ENCODE measurements at regions of chr6 and their contacts with region 1.

Region 1: DNA sequence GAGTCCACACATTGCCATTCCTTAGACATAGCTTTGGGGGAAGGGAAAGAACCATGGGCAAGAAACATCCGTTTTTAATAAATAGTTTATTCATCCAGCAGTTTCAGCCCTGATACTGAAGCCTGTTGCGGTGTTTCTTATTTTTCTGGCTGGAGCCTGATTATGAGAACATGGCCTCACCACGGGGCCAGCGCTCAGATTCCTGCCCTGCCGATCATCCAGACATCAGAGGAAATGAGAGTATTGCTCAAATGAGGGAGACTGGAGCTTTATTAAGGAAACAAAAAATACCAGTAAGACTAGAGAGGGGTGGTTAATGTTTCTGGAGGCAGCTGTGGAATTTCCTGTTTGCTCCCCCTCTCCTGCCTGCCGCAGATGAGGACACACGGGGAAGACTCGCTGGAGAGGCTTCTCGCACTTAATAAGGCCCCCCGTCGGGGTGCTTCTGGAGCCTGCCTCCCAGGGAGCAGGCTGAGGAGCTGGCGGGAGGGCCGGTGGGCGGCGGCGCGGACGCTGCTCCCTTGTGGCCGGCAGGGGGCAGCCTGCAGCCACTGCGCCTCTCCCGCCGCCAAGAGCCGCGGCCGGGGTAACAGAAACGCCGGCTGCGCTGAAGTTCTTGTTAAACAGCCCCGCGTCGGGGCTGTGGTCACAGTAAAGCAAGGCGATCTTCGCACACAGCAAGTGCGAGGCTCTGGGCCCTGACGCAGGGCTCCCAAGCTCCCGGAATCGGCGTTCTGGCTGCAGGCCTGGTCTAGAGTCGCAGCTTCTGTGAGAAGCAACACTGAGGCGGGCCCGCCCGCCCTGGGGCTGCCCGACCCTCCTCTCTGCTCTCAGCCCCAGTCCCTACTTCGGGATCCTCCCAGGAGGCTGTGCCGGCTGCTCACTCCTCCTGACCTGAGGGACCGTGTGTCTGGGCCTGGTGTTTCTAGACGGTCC is 17.5 kb downstream of the LEMD2 start:
- DNase-seq: peak; percentile 96
- ATAC-seq: peak; percentile 81
- H3K4me3 ChIP-seq: no peak overlapping the region
- H3K27ac ChIP-seq: peak overlapping the region; percentile 98
- H3K4me1 ChIP-seq: peaks cover 49% of the 10 kb centered on the region
- H3K27me3 ChIP-seq: no peaks in the 10 kb centered on the region
- CTCF ChIP-seq: peak; percentile 98
- POLR2A ChIP-seq: no peak
- RAD21 ChIP-seq: peak; percentile 90

Region 2: DNA sequence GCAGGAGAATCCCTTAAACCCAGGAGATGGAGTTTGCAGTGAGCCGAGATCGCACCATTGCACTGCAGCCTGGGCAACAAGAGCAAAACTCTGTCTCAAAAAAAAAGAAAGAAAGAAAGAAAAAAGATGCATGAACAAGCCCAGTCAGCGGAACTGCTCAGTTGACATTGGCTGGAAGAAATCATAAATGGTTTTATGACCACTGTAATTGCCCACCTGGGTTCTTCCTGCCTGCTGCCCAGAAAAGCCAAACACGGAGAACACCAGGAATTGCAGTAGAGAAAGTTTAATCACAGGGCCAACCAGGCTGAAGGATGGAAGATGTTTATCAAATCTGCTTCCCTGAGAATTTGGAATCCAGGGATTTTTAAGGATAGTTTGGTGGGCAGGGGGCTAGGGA is 214.0 kb before region 1 on chr6:
- CTCF ChIA-PET with region 1: no interaction called
- POLR2A ChIA-PET with region 1: no interaction called
- dilution Hi-C with region 1: no loop called
- in situ Hi-C with region 1: no loop called
- intact Hi-C with region 1: no loop called
- DNase-seq: no peak
- ATAC-seq: no peak
- H3K4me3 ChIP-seq: no peak overlapping the region
- H3K27ac ChIP-seq: no peak overlapping the region
- H3K4me1 ChIP-seq: no peaks in the 10 kb centered on the region
- H3K27me3 ChIP-seq: no peaks in the 10 kb centered on the region
- CTCF ChIP-seq: no peak
- POLR2A ChIP-seq: no peak
- RAD21 ChIP-seq: no peak

Region 3: GRCh38 chr6:33579828-33580714 is 191.3 kb before region 1 on chr6 and contains the start of gene BAK1:
- CTCF ChIA-PET with region 1: no interaction called
- POLR2A ChIA-PET with region 1: no interaction called
- dilution Hi-C with region 1: no loop called
- in situ Hi-C with region 1: loop called (anchors 10 kb)
- intact Hi-C with region 1: no loop called
- DNase-seq: peak; percentile 89
- ATAC-seq: peak; percentile 99
- H3K4me3 ChIP-seq: peak within 1 kb of the TSS; percentile 91
- H3K27ac ChIP-seq: peak within 1 kb of the TSS; percentile 80
- H3K4me1 ChIP-seq: peaks cover 6% of the 10 kb centered on the region
- H3K27me3 ChIP-seq: no peaks in the 10 kb centered on the region
- CTCF ChIP-seq: peak; percentile 55
- POLR2A ChIP-seq: peak; percentile 54; the same call in 1 of the 2 replicates
- RAD21 ChIP-seq: peak; percentile 26; the same call in 1 of the 2 replicates
- total RNA-seq, gene BAK1: 12.0 and 12.5 TPM in 2 replicates

Region 4: DNA sequence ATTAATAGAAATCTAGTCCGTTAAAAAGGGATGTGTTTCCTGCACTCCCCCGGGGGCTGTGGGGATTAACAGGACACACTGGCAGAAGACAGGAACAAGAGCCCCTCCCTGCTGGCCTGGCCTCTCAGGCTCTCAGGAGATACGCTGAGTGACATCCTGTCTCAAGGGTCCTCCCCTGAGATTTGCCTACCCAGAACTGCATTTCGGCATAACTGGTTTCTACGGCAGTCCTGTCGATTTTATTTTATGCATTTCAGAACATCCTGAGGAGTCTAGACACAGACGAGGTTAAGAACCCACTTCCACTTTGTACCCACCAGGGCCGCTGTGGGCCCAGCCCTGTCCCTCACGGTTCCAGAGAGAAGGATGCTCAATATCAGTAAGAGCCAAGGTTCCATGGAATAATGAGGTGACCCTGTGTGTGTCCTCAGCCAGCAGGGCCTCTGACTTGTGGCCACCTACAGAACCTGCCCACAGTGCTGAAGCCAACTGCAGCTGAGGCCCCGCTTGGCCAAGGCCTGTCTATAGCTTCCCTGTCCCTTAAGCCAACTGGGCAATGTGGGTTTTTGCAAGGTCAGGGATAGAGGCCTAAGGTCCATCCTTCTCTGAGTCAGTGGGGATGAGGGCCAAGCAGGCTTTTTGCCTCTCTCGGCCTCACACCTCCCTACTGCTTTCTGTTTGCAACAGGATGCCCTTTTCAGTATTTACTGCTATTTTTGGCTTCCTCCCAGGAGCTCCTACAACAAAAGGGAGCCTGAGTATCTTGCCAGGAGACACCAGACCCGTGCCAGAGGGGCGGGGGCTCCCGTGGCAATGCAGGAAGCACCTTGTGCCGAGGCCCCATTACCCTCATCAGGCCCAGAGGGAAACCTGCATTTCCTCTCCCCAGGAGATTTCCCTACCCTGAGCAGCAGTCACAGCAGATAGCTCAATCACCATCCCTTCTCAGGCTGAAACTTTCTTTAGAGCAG is 74.6 kb before region 1 on chr6:
- CTCF ChIA-PET with region 1: no interaction called
- POLR2A ChIA-PET with region 1: no interaction called
- dilution Hi-C with region 1: no loop called
- in situ Hi-C with region 1: no loop called
- intact Hi-C with region 1: no loop called
- DNase-seq: peak; percentile 61
- ATAC-seq: peak; percentile 72
- H3K4me3 ChIP-seq: no peak overlapping the region
- H3K27ac ChIP-seq: peak overlapping the region; percentile 23; the same call in 1 of the 2 replicates
- H3K4me1 ChIP-seq: peaks cover 20% of the 10 kb centered on the region
- H3K27me3 ChIP-seq: no peaks in the 10 kb centered on the region
- CTCF ChIP-seq: no peak
- POLR2A ChIP-seq: no peak
- RAD21 ChIP-seq: no peak

Region 5: GRCh38 chr6:33744001-33744848 is 27.2 kb before region 1 on chr6:
- CTCF ChIA-PET with region 1: interaction called, 17 read pairs
- POLR2A ChIA-PET with region 1: no interaction called
- dilution Hi-C with region 1: no loop called
- in situ Hi-C with region 1: no loop called
- intact Hi-C with region 1: loop called (anchors 2 kb)
- DNase-seq: peak; percentile 70
- ATAC-seq: peak; percentile 61
- H3K4me3 ChIP-seq: no peak overlapping the region
- H3K27ac ChIP-seq: no peak overlapping the region
- H3K4me1 ChIP-seq: peaks cover 22% of the 10 kb centered on the region
- H3K27me3 ChIP-seq: peaks cover 6% of the 10 kb centered on the region; the same call in 1 of the 2 replicates
- CTCF ChIP-seq: peak; percentile 95
- POLR2A ChIP-seq: no peak
- RAD21 ChIP-seq: peak; percentile 91

Region 6: DNA sequence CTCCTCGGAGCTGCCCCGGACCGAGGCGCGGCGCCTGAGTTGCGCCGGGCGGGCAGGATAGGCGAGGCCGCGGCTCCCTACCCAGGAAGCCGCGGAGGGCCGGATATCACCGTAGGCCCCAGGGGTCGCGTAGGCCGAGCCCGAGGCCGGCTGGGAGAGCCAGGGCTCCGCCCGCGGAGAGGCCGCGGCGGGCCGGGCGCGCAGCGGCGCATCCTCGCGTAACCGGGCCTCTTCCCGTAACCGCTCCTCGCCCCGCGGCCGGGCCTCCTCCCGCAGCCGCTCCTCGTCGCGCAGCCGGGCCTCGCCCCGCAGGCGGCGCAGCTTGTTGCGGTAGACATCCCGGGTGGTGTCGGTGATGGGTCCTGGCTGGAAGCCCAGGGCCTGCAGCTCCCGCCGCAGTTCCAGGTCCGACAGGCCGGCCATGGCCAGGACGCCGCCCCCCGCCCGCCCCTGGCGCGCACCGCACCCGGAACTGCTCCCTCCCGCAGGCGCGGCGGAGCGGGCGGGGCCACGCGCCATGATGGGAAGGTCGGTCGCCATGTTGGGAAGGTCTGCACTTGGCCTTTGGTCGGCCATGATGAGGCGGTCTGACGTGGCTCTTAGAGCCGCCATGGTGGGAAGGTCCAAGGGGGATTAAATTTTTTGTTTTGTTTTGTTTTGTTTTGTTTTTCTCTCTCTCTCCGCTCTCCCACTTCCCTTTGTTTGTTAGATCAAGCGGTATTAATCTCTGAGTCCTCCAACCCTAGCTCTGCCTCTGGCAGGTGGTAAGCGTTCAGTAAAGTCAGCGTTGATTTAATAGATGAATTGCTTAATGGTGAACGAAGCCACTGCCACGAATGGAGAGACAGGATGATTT is 17.5 kb after region 1 on chr6 and contains the start of gene LEMD2:
- CTCF ChIA-PET with region 1: interaction called, 8 read pairs
- POLR2A ChIA-PET with region 1: interaction called, 3 read pairs
- dilution Hi-C with region 1: no loop called
- in situ Hi-C with region 1: no loop called
- intact Hi-C with region 1: loop called (anchors 2 kb)
- DNase-seq: peak; percentile 94
- ATAC-seq: peak; percentile 93
- H3K4me3 ChIP-seq: peak within 1 kb of the TSS; percentile 77
- H3K27ac ChIP-seq: peak within 1 kb of the TSS; percentile 88
- H3K4me1 ChIP-seq: peaks cover 13% of the 10 kb centered on the region
- H3K27me3 ChIP-seq: peaks cover 6% of the 10 kb centered on the region
- CTCF ChIP-seq: no peak
- POLR2A ChIP-seq: peak; percentile 71
- RAD21 ChIP-seq: no peak
- total RNA-seq, gene LEMD2: 24.4 and 26.5 TPM in 2 replicates

Region 7: GRCh38 chr6:34027445-34027936 is 256.1 kb after region 1 on chr6:
- CTCF ChIA-PET with region 1: interaction called, 19 read pairs
- POLR2A ChIA-PET with region 1: no interaction called
- dilution Hi-C with region 1: no loop called
- in situ Hi-C with region 1: loop called (anchors 5 kb)
- intact Hi-C with region 1: loop called (anchors 1 kb)
- DNase-seq: peak; percentile 3
- ATAC-seq: peak; percentile 85
- H3K4me3 ChIP-seq: no peak overlapping the region
- H3K27ac ChIP-seq: no peak overlapping the region
- H3K4me1 ChIP-seq: no peaks in the 10 kb centered on the region
- H3K27me3 ChIP-seq: peaks cover 54% of the 10 kb centered on the region
- CTCF ChIP-seq: peak; percentile 73
- POLR2A ChIP-seq: no peak; the same call in 1 of the 2 replicates
- RAD21 ChIP-seq: peak; percentile 75

Measured in IMR-90 (cell line).